HepG2 (cell line): ENCODE measurements at regions of chr15 and their contacts with region 1.

Region 1: DNA sequence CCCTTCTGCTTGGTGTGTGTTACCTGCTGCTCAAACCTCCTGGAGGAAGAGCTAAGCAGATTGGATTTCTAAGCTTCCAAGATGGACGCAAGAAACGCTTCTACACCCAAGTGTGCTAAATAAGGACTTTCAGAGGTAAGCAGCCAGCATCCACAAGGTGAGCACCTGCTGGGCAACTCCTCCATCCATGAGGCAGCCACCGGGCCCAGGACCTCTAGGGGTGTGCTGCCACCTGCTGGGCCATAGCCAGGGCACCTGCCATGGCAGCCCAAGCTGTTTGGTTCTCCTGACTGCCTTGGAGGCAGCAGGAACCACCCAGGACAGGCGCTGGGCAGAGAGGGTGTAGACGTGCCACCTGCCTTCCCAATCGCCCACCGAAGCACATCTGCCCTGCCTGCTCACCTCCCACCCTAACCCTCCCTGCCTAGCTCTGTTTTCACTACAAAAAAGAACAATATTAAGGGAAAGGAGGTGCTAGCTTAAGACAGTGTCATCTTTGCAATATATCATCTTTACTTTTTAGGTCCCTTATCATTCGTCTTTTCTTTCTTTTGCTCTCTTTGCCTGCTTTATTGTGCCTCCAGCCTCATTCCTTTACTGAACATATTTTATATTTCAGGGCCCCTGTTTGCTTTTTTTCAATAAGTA is 12.9 kb downstream of the C15orf62 start:
- DNase-seq: peak; percentile 62
- ATAC-seq: peak; percentile 99
- H3K4me3 ChIP-seq: no peak overlapping the region
- H3K27ac ChIP-seq: no peak overlapping the region
- H3K4me1 ChIP-seq: peaks cover 28% of the 10 kb centered on the region
- H3K27me3 ChIP-seq: no peaks in the 10 kb centered on the region
- CTCF ChIP-seq: peak; percentile 98
- EP300 ChIP-seq: no peak
- POLR2A ChIP-seq: no peak
- RAD21 ChIP-seq: peak; percentile 98

Region 2: DNA sequence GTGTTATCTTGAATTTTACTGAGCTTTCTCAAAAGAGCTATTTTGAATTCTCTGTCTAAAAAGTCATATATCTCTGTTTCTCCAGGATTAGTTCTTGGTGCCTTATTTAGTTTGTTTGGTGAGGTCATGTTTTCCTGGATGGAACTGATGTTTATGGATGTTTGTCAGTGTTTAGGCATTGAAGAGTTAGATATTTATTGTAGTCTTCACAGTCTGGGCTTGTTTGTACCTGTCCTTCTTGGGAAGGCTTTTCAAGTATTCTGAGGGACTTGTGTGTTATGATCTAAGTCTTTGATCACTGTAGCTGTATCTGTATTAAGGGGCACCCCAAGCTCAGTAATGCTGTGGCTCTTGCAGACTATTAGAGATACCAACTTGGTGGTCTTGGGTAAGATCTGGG is 98.3 kb before region 1 on chr15:
- CTCF ChIA-PET with region 1: interaction called, 7 read pairs
- POLR2A ChIA-PET with region 1: no interaction called
- in situ Hi-C with region 1: no loop called
- intact Hi-C with region 1: loop called (anchors 2 kb)
- DNase-seq: no peak
- ATAC-seq: no peak
- H3K4me3 ChIP-seq: no peak overlapping the region
- H3K27ac ChIP-seq: no peak overlapping the region
- H3K4me1 ChIP-seq: peaks cover 16% of the 10 kb centered on the region
- H3K27me3 ChIP-seq: no peaks in the 10 kb centered on the region
- CTCF ChIP-seq: no peak
- EP300 ChIP-seq: no peak
- POLR2A ChIP-seq: no peak
- RAD21 ChIP-seq: no peak

Region 3: GRCh38 chr15:40743921-40744814 is 38.5 kb before region 1 on chr15:
- CTCF ChIA-PET with region 1: interaction called, 28 read pairs
- POLR2A ChIA-PET with region 1: no interaction called
- in situ Hi-C with region 1: no loop called
- intact Hi-C with region 1: loop called (anchors 1 kb)
- DNase-seq: no peak
- ATAC-seq: peak; percentile 44; the same call in 2 of the 3 replicates
- H3K4me3 ChIP-seq: no peak overlapping the region
- H3K27ac ChIP-seq: no peak overlapping the region
- H3K4me1 ChIP-seq: peaks cover 7% of the 10 kb centered on the region; the same call in 1 of the 2 replicates
- H3K27me3 ChIP-seq: no peaks in the 10 kb centered on the region
- CTCF ChIP-seq: no peak
- EP300 ChIP-seq: no peak
- POLR2A ChIP-seq: no peak
- RAD21 ChIP-seq: no peak